Mammary epithelial cell (primary cell): ENCODE measurements at regions of chr1 and their contacts with region 1.

Region 1: DNA sequence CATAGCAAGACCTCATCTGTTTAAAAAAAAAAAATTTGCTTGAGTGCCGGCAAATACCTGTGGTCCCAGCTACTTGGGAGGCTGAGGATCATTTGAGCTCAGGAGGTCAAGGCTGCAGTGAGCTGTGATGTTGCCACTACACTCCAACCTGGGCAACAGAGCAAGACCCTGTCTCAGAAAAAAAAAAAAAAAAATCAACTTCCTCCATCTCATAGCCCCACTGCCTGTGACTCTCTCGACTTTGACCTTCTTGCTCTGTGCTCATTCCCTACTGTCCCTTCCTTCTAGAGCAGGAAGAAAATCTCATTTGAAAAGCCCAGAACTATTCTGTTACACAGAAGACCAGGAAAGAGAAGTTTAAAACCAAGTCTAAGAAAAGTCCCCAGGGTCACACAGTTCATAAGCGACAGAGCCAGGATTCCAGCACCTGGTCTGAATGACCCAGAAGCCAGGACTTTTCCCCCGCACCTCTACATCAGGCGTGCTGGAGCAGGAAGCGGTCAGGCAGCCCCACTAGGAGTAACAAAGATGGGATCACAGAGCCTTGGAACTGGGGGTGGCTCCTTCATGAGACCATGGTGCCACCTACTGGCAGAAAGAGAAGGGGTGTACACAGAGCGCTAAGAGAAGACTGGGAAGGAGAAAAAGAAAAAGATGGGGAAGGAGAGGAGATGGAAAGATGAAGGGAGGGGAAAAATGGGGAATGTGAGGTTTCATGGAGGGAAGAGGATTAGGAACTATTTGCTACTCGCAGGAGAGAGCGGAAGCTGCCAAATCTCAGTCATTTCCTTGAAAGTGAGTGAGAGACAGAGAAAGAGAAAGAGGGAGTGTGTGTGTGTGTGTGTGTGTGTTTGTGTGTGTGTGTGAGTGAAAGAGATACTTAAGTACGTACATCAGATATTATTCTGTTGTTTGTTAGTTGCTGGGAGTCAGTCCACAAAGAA is 3.1 kb upstream of the P3R3URF start:
- DNase-seq: peak; percentile 88
- H3K4me3 ChIP-seq: peak overlapping the region in 1 of 3 experiments; percentile 36
- H3K27ac ChIP-seq: peak overlapping the region; percentile 79
- H3K4me1 ChIP-seq: peaks cover 49% of the 10 kb centered on the region
- H3K27me3 ChIP-seq: no peaks in the 10 kb centered on the region
- CTCF ChIP-seq: peak; percentile 86 to 98

Region 2: GRCh38 chr1:45883633-45884032 is 295.8 kb before region 1 on chr1:
- CTCF ChIA-PET with region 1: no interaction called
- dilution Hi-C with region 1: no loop called
- in situ Hi-C with region 1: no loop called
- intact Hi-C with region 1: loop called (anchors 1 kb)
- DNase-seq: no peak
- H3K4me3 ChIP-seq: no peak overlapping the region
- H3K27ac ChIP-seq: no peak overlapping the region
- H3K4me1 ChIP-seq: peaks cover 5% of the 10 kb centered on the region
- H3K27me3 ChIP-seq: no peaks in the 10 kb centered on the region
- CTCF ChIP-seq: no peak

Region 3: GRCh38 chr1:45895406-45895805 is 284.0 kb before region 1 on chr1:
- CTCF ChIA-PET with region 1: no interaction called
- dilution Hi-C with region 1: no loop called
- in situ Hi-C with region 1: no loop called
- intact Hi-C with region 1: no loop called
- DNase-seq: peak; percentile 45
- H3K4me3 ChIP-seq: no peak overlapping the region
- H3K27ac ChIP-seq: no peak overlapping the region
- H3K4me1 ChIP-seq: peaks cover 14% of the 10 kb centered on the region
- H3K27me3 ChIP-seq: no peaks in the 10 kb centered on the region
- CTCF ChIP-seq: no peak

Region 4: DNA sequence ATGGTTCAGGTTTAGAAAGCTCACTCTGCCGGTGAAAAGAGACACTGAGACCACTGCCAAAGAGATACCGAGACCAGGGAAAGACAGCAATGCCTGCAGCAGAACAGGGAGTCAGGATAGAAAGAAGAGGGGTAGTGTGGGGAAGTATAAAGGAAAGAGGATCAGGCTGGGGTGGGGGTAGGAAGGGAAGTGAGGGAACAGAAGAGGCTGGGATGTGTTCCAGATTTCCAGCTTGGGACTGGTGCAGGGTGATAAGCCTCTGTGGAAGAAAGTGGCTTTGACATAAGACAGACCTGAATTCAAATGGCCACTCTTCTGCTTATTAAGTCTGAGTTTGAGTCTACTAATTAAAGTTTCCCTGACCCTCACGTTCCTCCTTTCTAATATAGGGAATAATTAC is 152.9 kb before region 1 on chr1:
- CTCF ChIA-PET with region 1: no interaction called
- dilution Hi-C with region 1: no loop called
- in situ Hi-C with region 1: no loop called
- intact Hi-C with region 1: no loop called
- DNase-seq: no peak
- H3K4me3 ChIP-seq: no peak overlapping the region
- H3K27ac ChIP-seq: no peak overlapping the region
- H3K4me1 ChIP-seq: no peaks in the 10 kb centered on the region
- H3K27me3 ChIP-seq: no peaks in the 10 kb centered on the region
- CTCF ChIP-seq: no peak

Region 5: DNA sequence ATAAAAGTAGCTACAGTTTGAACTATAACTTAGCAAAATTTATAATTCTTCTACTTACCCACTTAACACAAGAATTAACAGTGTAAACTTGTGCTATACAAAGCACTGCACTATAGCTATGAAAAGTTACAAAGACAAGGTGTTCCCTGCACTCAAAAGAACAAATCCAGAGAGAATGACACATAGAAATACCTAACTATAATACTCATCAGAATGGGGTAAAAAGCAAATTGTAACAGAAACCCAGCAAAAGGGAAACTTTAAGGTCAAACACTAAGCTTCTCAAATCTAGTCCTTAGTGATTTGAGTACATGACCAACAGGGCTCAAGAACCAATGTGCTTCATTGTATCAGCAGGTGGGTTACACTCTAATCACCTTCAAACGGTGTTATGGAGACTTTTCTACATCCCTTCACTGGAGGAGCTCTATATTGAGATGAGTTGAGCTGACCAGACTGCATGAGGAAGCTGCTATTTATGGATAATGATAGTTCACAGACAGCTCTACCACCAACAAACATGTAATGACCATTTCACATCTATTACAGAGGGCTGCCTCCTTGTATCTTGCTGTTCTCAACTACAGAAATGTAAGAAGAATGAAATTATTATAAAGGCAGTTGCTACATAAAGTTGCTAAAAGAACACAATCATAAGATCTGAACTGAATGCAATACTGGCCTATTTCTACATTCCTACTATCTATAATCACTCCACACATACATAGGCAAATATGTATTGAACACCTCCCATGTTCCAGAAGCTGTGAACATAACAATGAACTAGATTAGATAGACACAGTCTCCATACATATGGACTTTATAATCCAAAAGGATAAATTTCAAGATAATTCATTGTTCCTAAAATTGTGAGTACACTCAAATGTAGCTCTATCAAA is 94.6 kb before region 1 on chr1:
- CTCF ChIA-PET with region 1: no interaction called
- dilution Hi-C with region 1: no loop called
- in situ Hi-C with region 1: no loop called
- intact Hi-C with region 1: loop called (anchors 1 kb)
- DNase-seq: peak; percentile 66
- H3K4me3 ChIP-seq: no peak overlapping the region
- H3K27ac ChIP-seq: peak overlapping the region; percentile 88
- H3K4me1 ChIP-seq: peaks cover 15% of the 10 kb centered on the region
- H3K27me3 ChIP-seq: no peaks in the 10 kb centered on the region
- CTCF ChIP-seq: no peak

Region 6: DNA sequence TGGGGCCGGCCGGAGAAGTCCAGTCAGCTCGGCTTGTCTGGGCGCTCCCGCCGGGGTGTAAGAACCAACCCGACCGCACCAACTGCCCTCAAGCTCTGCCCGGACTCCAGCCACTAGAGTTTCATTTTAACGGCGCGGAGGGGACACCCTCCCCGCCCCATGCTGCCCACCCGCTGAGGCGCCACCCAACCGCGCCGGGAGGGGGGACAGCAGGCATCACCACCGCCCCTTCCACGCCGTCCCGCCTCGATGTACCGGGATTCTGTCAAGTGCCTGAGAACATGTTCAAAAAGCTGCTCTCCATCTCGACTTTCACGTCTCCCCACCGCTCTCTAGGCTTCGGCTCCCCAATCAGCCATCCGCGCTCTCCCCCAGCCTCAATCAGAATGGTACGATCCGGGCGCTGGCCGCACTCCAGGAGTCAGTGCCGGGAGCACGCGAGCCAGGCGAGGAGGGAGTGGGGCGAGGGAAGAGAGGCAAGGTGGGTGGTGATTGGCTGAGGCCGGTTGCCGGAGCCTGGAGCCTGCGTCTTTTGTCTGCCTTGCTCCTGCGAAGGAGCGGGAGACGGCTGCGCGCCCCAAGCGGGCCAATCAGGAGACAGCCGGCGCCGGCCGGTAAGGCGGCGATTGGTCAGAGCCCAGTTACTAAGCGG is 46.8 kb before region 1 on chr1 and contains the start of gene PIK3R3:
- CTCF ChIA-PET with region 1: interaction called, 7 read pairs
- dilution Hi-C with region 1: no loop called
- in situ Hi-C with region 1: no loop called
- intact Hi-C with region 1: loop called (anchors 1 kb)
- DNase-seq: peak; percentile 99
- H3K4me3 ChIP-seq: peak within 1 kb of the TSS; percentile 76 to 99 (median 78)
- H3K27ac ChIP-seq: peak within 1 kb of the TSS; percentile 91
- H3K4me1 ChIP-seq: peaks cover 26% of the 10 kb centered on the region
- H3K27me3 ChIP-seq: no peaks in the 10 kb centered on the region
- CTCF ChIP-seq: no peak
- total RNA-seq, gene PIK3R3: 12.8 to 13.8 TPM

Region 7: DNA sequence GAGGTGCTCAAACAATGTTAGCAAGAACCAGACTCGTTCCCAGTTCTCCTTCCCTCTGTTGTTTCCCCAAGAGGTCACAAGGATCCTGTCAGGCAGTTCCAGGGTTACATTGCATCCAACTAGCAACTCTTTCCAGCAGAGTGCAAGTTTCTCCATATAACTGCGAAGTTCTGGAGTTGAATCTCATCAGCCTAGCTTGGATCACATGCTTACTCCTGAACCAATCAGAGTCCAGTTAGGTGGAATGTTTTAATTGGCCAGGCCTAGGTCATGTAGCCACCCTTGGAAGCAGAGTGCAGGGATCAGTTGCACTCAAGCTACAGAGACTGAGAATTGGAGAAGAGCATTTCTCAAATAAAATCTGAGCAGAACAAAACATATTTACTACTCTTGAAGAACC is 31.1 kb before region 1 on chr1:
- CTCF ChIA-PET with region 1: no interaction called
- dilution Hi-C with region 1: no loop called
- in situ Hi-C with region 1: no loop called
- intact Hi-C with region 1: no loop called
- DNase-seq: no peak
- H3K4me3 ChIP-seq: no peak overlapping the region
- H3K27ac ChIP-seq: no peak overlapping the region
- H3K4me1 ChIP-seq: no peaks in the 10 kb centered on the region
- H3K27me3 ChIP-seq: no peaks in the 10 kb centered on the region
- CTCF ChIP-seq: no peak

Region 8: GRCh38 chr1:46218443-46218842 is 39.0 kb after region 1 on chr1:
- CTCF ChIA-PET with region 1: interaction called, 13 read pairs
- dilution Hi-C with region 1: no loop called
- in situ Hi-C with region 1: loop called in 1 of 2 experiments (anchors 5 kb)
- intact Hi-C with region 1: loop called (anchors 1 kb)
- DNase-seq: peak; percentile 94
- H3K4me3 ChIP-seq: peak overlapping the region in 1 of 3 experiments; percentile 26
- H3K27ac ChIP-seq: peak overlapping the region; percentile 43
- H3K4me1 ChIP-seq: peaks cover 18% of the 10 kb centered on the region
- H3K27me3 ChIP-seq: no peaks in the 10 kb centered on the region
- CTCF ChIP-seq: no peak

Region 9: GRCh38 chr1:46247436-46248121 is 68.2 kb after region 1 on chr1 and contains the start of gene RAD54L:
- CTCF ChIA-PET with region 1: no interaction called
- dilution Hi-C with region 1: no loop called
- in situ Hi-C with region 1: no loop called
- intact Hi-C with region 1: loop called (anchors 2 kb)
- DNase-seq: peak; percentile 99
- H3K4me3 ChIP-seq: peak within 1 kb of the TSS; percentile 75 to 88 (median 81)
- H3K27ac ChIP-seq: peak within 1 kb of the TSS; percentile 73
- H3K4me1 ChIP-seq: peaks cover 16% of the 10 kb centered on the region
- H3K27me3 ChIP-seq: no peaks in the 10 kb centered on the region
- CTCF ChIP-seq: no peak
- total RNA-seq, gene RAD54L: 1.2 to 14.3 TPM

Region 10: GRCh38 chr1:46527474-46528296 is 348.3 kb after region 1 on chr1:
- CTCF ChIA-PET with region 1: no interaction called
- dilution Hi-C with region 1: no loop called
- in situ Hi-C with region 1: no loop called
- intact Hi-C with region 1: no loop called
- DNase-seq: peak; percentile 52
- H3K4me3 ChIP-seq: no peak overlapping the region
- H3K27ac ChIP-seq: no peak overlapping the region
- H3K4me1 ChIP-seq: peaks cover 16% of the 10 kb centered on the region
- H3K27me3 ChIP-seq: no peaks in the 10 kb centered on the region
- CTCF ChIP-seq: peak; percentile 97